Heart left ventricle (tissue), 16 donors: ENCODE measurements at regions of chr20 and their contacts with region 1.

Region 1: GRCh38 chr20:6828794-6829423 is 61.4 kb downstream of the BMP2 start:
- DNase-seq: peak in 4 of 5 donors; percentile 32 to 69 (median 43)
- ATAC-seq: peak in 3 of 4 donors; percentile 77 to 86 (median 83)
- H3K4me3 ChIP-seq: no peak overlapping the region
- H3K27ac ChIP-seq: no peak overlapping the region
- H3K4me1 ChIP-seq: no peaks in the 10 kb centered on the region
- H3K27me3 ChIP-seq: no peaks in the 10 kb centered on the region
- CTCF ChIP-seq: peak; percentile 63 to 83 (median 68)
- POLR2A ChIP-seq: no peak

Region 2: DNA sequence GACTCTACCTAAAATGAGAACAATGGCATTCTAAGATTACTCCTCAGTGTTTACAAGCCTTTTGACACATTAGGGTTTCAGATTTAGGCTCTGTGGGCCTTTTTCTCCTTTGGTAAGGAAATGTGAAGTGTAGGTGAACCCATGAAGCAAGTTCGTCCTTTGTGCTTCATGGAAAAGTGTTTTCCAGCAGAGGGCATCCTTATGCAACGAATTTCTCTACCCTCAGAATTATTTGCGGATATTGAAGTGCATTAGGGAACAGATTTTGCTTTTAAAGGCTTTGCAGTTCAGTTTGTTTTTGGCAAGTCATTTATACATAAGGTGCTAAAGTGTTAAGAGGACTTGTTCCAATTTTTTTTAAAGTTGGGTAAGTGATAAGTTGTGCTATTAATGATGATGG is 650.4 kb before region 1 on chr20:
- intact Hi-C with region 1: loop called in 1 of 10 experiments (anchors 10 kb)
- DNase-seq: no peak
- ATAC-seq: no peak
- H3K4me3 ChIP-seq: no peak overlapping the region
- H3K27ac ChIP-seq: no peak overlapping the region
- H3K4me1 ChIP-seq: no peaks in the 10 kb centered on the region
- H3K27me3 ChIP-seq: no peaks in the 10 kb centered on the region
- CTCF ChIP-seq: peak in 9 of 12 donors; percentile 28 to 59 (median 44)
- POLR2A ChIP-seq: no peak

Region 3: DNA sequence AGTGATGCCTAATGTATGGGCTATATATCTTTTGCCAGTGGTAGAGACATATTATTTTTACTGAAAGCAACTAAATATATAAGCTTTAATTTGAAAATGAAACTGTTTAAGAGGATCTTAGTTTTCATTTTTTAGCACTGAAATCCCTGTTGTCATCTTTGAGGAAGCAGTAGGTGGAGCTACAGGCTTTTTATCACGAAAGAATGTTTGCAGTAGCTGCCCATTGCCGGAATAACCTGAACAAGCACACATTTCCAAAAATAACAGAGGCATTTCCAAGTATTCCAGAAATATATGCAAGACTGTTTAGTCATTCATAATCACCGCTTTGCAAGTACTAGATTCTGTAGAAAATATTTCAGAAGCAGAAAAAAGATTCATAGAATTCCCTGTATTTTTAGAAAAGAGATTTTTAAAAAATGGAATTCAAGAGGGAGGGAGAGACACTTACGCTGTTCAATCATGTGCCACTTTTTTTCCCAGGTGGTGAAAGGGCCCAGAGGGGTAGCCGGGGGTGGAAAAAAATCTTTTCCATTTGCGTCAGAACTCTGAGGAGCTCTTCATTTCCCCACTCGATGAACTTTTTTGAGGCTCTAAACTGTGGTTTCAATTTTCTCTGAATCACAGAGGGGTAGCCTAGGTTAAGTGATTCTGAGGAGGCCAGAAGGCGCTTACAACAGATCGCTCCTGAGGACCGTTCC is 563.6 kb before region 1 on chr20:
- intact Hi-C with region 1: loop called in 1 of 10 experiments (anchors 10 kb)
- DNase-seq: peak in 1 of 5 donors; percentile 22
- ATAC-seq: peak in 3 of 4 donors; percentile 65 to 87 (median 83)
- H3K4me3 ChIP-seq: peak overlapping the region in 5 of 12 donors; percentile 8 to 37 (median 16)
- H3K27ac ChIP-seq: peak overlapping the region in 9 of 12 donors; percentile 3 to 57 (median 17)
- H3K4me1 ChIP-seq: peaks cover 0 to 10% (median 3%) of the 10 kb centered on the region in 12 donors
- H3K27me3 ChIP-seq: no peaks in the 10 kb centered on the region
- CTCF ChIP-seq: peak in 11 of 12 donors; percentile 9 to 65 (median 34)
- POLR2A ChIP-seq: no peak

Region 4: DNA sequence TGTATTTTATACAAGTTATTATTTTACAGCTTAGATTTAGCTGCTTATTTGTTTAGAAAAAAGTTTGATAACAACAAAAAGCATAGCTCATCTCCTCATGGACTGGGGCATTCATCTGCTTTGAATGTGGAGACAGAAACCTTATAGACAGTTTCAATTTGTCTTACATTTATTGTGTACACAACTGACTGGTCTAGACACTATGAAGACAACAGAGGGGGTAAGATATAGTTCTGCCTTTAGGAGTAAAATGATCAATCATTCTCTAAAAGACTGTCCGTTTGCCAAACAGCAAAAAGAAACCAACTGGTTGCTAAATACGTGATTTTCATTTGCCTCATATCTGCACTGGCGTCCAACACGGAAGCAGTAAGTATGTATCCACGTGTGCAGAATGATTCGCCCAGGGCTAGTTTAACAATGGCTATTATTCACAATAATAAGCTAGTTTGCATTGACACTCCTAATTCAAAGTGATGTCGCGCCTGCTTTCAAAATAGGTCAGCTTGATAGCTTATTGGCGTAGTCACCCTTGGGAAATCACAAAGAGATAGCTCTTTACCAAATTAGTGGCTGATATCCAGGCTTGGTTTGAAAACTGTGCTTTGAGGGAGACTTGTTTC is 92.2 kb after region 1 on chr20:
- intact Hi-C with region 1: no loop called
- DNase-seq: no peak
- ATAC-seq: no peak
- H3K4me3 ChIP-seq: no peak overlapping the region
- H3K27ac ChIP-seq: no peak overlapping the region
- H3K4me1 ChIP-seq: no peaks in the 10 kb centered on the region
- H3K27me3 ChIP-seq: no peaks in the 10 kb centered on the region
- CTCF ChIP-seq: no peak
- POLR2A ChIP-seq: no peak

Region 5: DNA sequence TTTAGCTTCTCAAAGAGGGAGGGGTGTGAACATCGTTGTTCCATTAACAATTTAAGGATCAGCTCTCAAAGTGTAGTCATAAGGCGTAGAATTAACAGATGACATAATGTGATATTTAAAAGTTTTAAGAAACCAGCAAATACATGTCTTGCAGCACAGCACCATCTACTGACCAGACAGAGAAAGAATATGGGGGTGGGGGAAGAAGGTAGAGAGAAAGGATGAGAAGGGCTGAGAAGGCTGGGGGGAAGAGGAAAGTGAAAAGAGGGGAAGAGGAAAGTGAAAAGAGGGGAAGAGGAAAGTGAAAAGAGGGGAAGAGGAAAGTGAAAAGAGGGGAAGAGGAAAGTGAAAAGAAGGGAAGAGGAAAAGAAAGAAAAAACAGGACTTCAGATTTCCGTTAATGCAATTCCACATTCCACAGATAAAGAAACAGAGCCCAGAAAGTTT is 1030.5 kb after region 1 on chr20:
- intact Hi-C with region 1: loop called (anchors 2 to 10 kb)
- DNase-seq: peak in 2 of 5 donors; percentile 22 to 29
- ATAC-seq: peak; percentile 55 to 86 (median 74)
- H3K4me3 ChIP-seq: no peak overlapping the region
- H3K27ac ChIP-seq: no peak overlapping the region
- H3K4me1 ChIP-seq: peaks cover 0 to 7% (median 4%) of the 10 kb centered on the region in 12 donors
- H3K27me3 ChIP-seq: peaks cover 0 to 5% (median 0%) of the 10 kb centered on the region in 9 donors
- CTCF ChIP-seq: peak; percentile 17 to 68 (median 56)
- POLR2A ChIP-seq: no peak

Region 6: GRCh38 chr20:7926767-7927166 is 1097.9 kb after region 1 on chr20:
- intact Hi-C with region 1: loop called in 1 of 10 experiments (anchors 5 kb)
- DNase-seq: no peak
- ATAC-seq: no peak
- H3K4me3 ChIP-seq: no peak overlapping the region
- H3K27ac ChIP-seq: no peak overlapping the region
- H3K4me1 ChIP-seq: peaks cover 0 to 12% (median 0%) of the 10 kb centered on the region in 12 donors
- H3K27me3 ChIP-seq: no peaks in the 10 kb centered on the region
- CTCF ChIP-seq: peak in 11 of 12 donors; percentile 21 to 67 (median 40)
- POLR2A ChIP-seq: no peak